Lower leg skin (tissue), 4 donors: ENCODE measurements at regions of chr9 and their contacts with region 1.

Region 1: DNA sequence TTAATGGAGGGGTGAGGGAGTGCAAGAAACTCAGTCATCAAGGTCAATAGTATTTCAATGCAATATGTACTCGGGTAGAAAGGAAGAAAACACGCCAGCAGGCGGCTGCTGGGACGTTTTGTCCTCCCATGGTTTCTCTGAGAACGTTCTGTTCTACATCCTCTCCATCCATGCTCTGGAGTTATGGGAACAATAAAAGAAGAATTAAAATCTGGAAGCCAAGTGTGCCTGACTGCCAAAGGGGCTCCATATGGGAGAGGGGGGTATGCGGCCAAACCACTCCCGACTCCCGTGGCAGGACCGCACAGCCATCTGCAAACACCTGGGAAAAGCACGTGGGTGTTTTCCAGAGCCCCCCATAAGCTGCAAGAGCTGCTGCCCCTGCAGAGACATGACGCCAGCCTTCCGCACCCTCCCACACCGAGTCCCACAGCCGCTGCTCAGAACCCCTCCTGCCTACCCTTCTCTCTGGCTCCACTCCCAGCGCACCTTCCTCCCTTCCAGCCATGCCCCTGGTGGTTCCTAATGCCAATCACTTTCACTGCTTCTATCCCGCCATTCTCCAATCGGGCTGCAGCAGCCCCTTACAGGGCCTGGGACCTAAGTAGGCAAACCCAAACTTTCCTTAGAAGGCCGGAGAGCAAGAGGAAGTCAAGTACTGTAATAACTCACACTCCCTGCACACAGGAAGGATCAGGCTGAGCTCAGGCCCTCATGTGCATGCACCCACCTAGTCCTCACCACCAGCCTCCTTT is 241.6 kb downstream of the SYK start:
- DNase-seq: peak; percentile 71 to 88
- H3K4me3 ChIP-seq: no peak overlapping the region
- CTCF ChIP-seq: no peak
- POLR2A ChIP-seq: no peak

Region 2: GRCh38 chr9:90189306-90189705 is 853.9 kb before region 1 on chr9:
- intact Hi-C with region 1: no loop called
- DNase-seq: no peak
- H3K4me3 ChIP-seq: no peak overlapping the region
- CTCF ChIP-seq: no peak
- POLR2A ChIP-seq: no peak

Region 3: GRCh38 chr9:90546229-90546641 is 497.0 kb before region 1 on chr9:
- intact Hi-C with region 1: loop called (anchors 5 kb)
- DNase-seq: no peak
- H3K4me3 ChIP-seq: no peak overlapping the region
- CTCF ChIP-seq: no peak
- POLR2A ChIP-seq: no peak